Dorsolateral prefrontal cortex (tissue), 120 donors: ENCODE measurements at regions of chr17 and their contacts with region 1.

Region 1: GRCh38 chr17:18009609-18010420 is 29.2 kb downstream of the ATPAF2 start:
- DNase-seq: no peak
- H3K4me3 ChIP-seq: no peak overlapping the region
- H3K27ac ChIP-seq: no peak overlapping the region
- H3K27me3 ChIP-seq: no peaks in the 10 kb centered on the region
- CTCF ChIP-seq: no peak

Region 2: DNA sequence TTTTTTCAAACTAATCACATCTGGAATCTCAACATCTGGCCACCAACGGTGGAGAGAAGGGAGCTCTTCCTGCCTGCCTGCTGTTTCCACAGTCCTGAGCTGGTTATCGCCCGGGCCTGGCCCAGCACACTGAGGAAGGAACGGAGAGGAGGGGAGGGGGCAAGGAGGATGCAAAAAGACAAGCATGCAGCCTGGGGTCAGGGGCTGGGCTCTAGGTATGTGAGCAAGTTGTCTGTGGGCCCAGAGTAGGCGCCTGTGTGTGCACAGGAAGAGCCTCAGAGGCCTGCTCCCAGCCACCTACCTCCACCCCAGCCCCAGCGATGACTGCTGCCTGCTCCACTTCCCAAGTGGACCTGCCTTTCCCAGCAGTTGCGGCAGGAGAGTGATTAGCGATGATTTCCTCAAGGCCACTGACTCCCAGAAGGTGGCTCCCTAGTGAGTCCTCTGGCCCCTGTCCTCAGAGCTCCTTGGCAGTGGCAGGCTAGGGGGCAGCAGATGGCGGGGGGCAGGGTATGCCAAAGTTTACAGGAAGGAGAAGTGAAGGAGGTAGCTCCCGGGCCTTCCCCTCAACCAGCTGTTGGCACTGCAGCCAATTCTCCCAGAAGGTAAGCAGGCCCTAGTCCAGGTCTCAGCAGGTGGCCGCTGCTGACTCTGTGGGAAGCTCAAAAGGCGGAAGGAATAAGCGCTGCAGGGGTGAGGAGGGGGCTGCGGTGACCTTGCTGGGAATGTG is 486.6 kb before region 1 on chr17:
- intact Hi-C with region 1: loop called in 1 of 2 experiments (anchors 5 kb)
- DNase-seq: no peak
- H3K4me3 ChIP-seq: no peak overlapping the region
- H3K27ac ChIP-seq: peak overlapping the region in 1 of 59 donors; percentile 23
- H3K27me3 ChIP-seq: no peaks in the 10 kb centered on the region
- CTCF ChIP-seq: no peak